OCI-LY7 (cell line): ENCODE measurements at regions of chr20 and their contacts with region 1.

Region 1: GRCh38 chr20:4813863-4814695 is 92.4 kb downstream of the PRND start:
- DNase-seq: peak; percentile 80
- H3K4me3 ChIP-seq: peak overlapping the region; percentile 75
- H3K27ac ChIP-seq: peak overlapping the region; percentile 95
- H3K4me1 ChIP-seq: peaks cover 70% of the 10 kb centered on the region
- CTCF ChIP-seq: no peak

Region 2: GRCh38 chr20:4633780-4634179 is 180.3 kb before region 1 on chr20:
- CTCF ChIA-PET with region 1: no interaction called
- POLR2A ChIA-PET with region 1: no interaction called
- intact Hi-C with region 1: no loop called
- DNase-seq: no peak
- H3K4me3 ChIP-seq: no peak overlapping the region
- H3K27ac ChIP-seq: no peak overlapping the region
- H3K4me1 ChIP-seq: no peaks in the 10 kb centered on the region
- CTCF ChIP-seq: no peak

Region 3: DNA sequence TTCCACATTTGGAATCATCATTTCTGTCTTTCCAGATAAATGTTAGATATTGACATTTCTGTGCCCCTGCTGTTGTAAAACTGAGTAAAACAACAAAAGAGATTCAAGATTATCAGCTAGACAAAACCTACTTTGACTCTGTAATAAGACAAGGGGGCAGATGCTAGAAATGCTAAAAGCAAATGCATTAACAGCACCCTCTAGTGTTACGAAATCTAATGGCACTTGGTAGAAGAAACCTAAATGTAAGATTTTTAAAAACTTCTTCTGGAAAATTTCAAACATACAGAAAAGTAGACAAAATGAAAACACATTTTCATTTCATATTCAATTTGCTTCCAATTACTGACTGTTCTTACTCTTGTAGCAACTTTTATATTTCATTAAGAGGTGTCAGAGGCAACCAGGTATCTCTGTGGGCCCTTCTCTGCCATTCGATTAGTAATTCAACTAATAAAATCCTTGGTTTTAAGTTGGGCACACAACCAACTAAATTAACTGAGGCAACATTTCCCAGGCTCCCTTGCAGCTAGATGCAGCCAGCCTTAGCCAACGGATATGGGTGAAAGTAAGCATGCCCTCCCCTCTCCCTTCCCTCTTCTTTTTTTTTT is 142.2 kb after region 1 on chr20:
- CTCF ChIA-PET with region 1: no interaction called
- POLR2A ChIA-PET with region 1: interaction called, 7 read pairs
- intact Hi-C with region 1: loop called (anchors 5 kb)
- DNase-seq: peak; percentile 77
- H3K4me3 ChIP-seq: no peak overlapping the region
- H3K27ac ChIP-seq: no peak overlapping the region
- H3K4me1 ChIP-seq: peaks cover 4% of the 10 kb centered on the region
- CTCF ChIP-seq: peak; percentile 99

Region 4: DNA sequence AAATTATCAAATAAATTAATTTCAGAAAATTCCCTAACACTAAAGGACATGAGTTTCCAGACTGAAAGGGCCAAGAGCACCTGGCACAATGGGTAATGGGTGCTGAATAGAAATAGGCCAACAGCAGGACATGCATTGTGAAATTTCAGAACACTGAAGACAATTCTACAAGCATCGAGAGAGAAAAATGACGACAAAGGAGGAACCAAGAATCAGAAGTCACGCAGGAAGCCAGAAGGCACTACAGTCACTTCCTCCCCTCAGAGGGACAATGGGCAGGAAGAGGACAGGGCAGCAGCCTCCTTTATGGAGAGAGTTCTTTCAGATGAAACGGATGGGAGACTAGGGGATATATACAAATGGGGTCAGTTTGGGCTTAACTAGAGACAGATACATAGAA is 276.1 kb after region 1 on chr20:
- CTCF ChIA-PET with region 1: no interaction called
- POLR2A ChIA-PET with region 1: interaction called, 4 read pairs
- intact Hi-C with region 1: loop called (anchors 5 kb)
- DNase-seq: peak; percentile 60
- H3K4me3 ChIP-seq: no peak overlapping the region
- H3K27ac ChIP-seq: peak overlapping the region; percentile 35
- H3K4me1 ChIP-seq: peaks cover 47% of the 10 kb centered on the region
- CTCF ChIP-seq: no peak

Region 5: DNA sequence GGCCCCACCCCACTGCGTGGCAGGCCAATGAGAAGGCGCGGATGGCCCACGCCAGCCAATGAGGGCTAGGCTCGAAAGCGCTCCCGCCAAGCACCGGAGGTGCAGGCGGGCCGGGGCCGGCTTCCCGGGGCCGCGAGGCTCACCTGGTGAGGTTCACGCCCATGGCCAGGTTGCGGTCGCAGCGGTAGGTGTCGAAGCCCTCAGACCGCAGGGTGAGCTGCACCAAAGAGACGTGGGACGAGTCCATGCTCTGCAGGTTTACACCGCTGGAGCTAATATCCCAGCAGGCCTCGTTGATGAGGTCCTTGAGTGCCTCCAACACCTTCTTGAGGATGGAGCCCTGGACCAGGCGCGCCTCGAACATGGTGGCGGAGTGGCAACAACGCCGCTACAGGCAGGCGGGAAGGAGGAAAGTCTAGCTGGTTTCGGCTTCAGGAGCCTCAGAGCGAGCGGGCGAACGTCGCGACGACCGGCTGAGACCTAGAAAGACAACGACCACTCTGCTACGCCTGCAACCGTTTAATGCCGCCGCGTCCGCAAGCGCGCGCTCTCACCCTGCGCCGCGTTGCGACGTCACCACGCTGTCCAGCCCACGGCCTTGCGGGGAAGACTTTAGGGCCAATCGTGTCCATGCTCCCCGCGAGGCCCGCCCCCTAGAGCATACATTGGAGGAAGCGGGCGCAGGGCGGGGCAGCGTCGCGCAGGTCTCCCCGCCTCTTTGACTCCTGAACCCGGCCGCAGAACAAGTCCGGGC is 305.5 kb after region 1 on chr20 and contains the start of gene PCNA:
- CTCF ChIA-PET with region 1: no interaction called
- POLR2A ChIA-PET with region 1: interaction called, 3 read pairs
- intact Hi-C with region 1: loop called (anchors 5 kb)
- DNase-seq: peak; percentile 99
- H3K4me3 ChIP-seq: peak within 1 kb of the TSS; percentile 98
- H3K27ac ChIP-seq: peak within 1 kb of the TSS; percentile 89
- H3K4me1 ChIP-seq: peaks cover 47% of the 10 kb centered on the region
- CTCF ChIP-seq: no peak
- total RNA-seq, gene PCNA: 499 and 567 TPM in 2 replicates

Region 6: GRCh38 chr20:5844063-5844681 is 1030.1 kb after region 1 on chr20:
- CTCF ChIA-PET with region 1: no interaction called
- POLR2A ChIA-PET with region 1: no interaction called
- intact Hi-C with region 1: no loop called
- DNase-seq: no peak
- H3K4me3 ChIP-seq: no peak overlapping the region
- H3K27ac ChIP-seq: no peak overlapping the region
- H3K4me1 ChIP-seq: peaks cover 6% of the 10 kb centered on the region
- CTCF ChIP-seq: no peak